AG04449 (cell line): ENCODE measurements at regions of chr6 and their contacts with region 1.

Region 1: DNA sequence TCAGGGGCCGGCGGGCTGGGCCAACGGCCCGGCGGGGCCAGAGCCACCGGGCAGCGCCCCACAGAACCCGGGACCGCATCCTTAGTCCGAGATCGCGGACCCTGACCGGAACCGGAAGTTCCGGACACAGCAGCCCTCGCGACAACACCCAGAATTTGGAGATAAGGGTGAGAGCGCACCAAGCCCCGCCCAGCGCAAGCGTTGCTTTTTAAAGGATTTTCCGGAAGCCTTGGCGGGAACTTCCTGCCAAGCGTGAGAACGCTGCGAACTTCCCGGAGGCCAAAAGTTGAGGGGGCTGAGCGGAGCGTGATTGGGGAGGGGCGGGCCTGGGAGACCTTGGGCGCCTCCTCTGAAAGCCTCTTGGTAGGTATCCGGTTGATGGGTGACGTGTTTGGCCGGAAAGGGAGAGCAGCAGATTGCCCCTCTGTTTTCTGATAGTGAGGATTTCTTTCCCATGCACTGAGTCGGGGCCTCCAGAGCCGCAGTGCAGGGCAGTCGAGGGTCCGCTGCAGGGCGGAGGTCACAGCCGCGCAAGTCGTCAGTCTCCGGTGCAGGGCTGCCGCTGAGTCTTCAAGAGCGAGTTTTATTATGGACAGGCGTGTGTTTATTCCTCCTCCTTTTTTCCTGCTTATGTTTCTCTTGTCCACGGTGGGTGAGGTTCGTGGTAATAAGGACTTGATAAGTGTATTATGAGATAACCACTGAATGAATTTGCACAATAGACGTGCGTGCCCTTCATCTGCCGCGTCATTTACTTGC is at the start of gene MTRF1L:
- DNase-seq: peak; percentile 82
- H3K4me3 ChIP-seq: peak within 1 kb of the TSS; percentile 87
- CTCF ChIP-seq: no peak

Region 2: DNA sequence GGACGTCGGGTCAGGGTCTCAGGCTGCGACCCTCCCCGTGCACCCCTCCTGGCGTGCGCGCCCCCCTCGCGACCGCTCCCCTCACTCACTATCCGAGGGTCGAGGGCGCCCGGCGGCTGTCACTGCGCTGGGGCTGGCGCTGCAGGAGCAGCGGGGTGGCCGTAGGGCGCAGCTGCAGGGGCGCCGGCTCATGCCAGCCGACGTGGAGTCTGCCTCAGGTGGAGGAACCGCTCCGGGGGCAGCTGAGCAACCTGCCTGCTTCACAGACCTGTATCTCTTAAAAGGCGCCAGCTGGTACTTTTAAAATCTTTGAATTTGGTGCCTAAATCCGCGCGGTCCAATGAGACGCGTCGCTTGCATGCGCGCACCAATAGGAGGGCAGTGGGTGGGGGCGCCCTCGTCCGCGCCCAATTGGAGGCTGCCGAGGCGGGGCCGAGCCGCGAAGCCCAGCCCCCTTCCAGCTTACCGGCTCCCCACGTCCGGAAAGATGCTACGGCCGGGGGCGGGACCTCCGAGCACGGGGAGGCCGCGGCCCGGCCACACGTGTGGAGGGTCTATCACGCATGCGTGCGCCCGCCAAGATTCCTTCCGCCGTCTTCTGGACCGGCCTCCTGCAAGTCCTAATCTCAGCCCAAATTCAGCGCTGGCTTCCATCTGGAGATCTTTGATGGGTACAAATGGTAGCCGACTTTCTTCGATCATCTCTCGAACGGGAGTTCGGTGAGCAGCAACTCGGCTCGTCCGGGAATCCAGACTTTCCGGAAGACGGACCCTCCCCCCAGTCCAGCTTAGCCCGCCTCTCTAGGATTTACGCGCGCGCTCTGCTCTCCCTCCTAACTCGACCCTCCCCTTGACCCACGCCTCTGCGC is 19.8 kb before region 1 on chr6 and contains the start of gene FBXO5:
- CTCF ChIA-PET with region 1: interaction called, 3 read pairs
- POLR2A ChIA-PET with region 1: interaction called, 10 read pairs
- DNase-seq: peak; percentile 83
- H3K4me3 ChIP-seq: peak within 1 kb of the TSS; percentile 92
- CTCF ChIP-seq: no peak